Heart right ventricle (tissue), 16 donors: ENCODE measurements at regions of chr2 and their contacts with region 1.

Region 1: DNA sequence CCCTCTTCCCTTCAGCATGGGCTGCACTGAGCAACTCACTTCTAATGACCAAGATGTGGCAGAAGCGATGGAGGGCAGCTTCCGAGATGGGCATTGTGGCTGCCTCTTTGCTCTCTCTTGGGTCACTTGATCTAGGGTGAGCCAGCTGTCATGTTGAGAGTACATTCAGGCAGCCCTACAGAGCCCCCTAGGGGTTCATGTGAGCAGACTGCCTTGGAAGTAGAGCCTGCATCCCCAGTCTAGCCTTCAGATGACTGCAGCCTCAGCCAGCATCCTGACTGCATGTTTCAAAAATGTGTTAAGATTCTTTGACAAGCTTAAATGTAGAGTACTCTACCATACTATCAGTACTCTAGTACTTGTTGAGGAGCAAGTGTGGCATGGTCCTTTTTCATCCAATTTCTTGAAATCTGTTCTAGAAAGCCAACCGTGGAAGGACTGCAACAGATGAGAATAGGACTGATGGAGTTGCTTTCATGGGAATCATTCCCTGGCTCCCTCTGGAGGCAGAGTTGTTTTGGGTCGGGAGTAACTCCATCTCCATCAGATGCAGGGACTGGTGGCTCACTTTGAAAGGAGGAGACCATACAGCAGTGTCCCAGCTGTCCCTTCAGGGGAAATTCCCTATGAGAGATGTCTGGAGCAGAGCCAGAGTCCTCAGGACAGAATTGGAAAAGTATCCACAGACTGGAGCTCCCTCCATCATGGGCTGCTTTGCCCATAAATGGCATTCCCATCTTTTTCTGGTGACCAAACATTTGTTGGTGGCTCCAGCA is 144.1 kb downstream of the NCK2 start:
- DNase-seq: peak in 1 of 2 donors; percentile 58
- ATAC-seq: peak in 7 of 8 donors; percentile 10 to 59 (median 37)
- H3K4me3 ChIP-seq: no peak overlapping the region
- H3K27ac ChIP-seq: peak overlapping the region in 4 of 10 donors; percentile 2 to 75 (median 6)
- H3K4me1 ChIP-seq: peaks cover 8 to 71% (median 50%) of the 10 kb centered on the region in 9 donors
- H3K27me3 ChIP-seq: no peaks in the 10 kb centered on the region
- CTCF ChIP-seq: peak in 1 of 9 donors; percentile 28

Region 2: GRCh38 chr2:105802587-105802986 is 86.2 kb before region 1 on chr2:
- intact Hi-C with region 1: loop called in 1 of 10 experiments (anchors 5 kb)
- DNase-seq: no peak
- ATAC-seq: no peak
- H3K4me3 ChIP-seq: no peak overlapping the region
- H3K27ac ChIP-seq: peak overlapping the region in 1 of 10 donors; percentile 11
- H3K4me1 ChIP-seq: peaks cover 6 to 83% (median 75%) of the 10 kb centered on the region in 9 donors
- H3K27me3 ChIP-seq: no peaks in the 10 kb centered on the region
- CTCF ChIP-seq: no peak

Region 3: DNA sequence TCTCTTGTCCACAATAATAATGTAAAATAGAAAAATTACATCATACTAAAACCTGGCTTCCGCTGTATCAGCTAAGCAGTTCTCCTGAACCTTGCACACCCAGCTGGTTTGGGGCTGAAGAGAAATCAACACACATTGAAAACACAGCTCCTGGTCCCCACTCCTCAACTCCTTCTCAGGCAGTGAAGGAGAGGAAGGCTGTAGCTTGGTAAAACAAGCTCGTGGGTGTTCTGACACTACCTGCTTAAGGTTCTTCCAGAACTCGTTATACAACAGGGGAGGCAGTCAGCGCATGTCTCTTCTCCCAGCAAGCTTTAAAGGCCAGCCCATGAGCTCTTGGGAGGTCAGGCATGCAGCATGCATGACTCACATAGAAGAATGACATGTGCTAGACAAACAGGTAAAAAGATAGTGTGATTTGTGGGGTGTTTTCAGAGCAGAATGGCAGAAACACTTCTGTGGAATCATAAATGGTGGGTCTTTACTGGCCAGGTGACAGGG is 236.1 kb after region 1 on chr2:
- intact Hi-C with region 1: no loop called
- DNase-seq: no peak
- ATAC-seq: no peak
- H3K4me3 ChIP-seq: no peak overlapping the region
- H3K27ac ChIP-seq: no peak overlapping the region
- H3K4me1 ChIP-seq: peaks cover 0 to 3% (median 0%) of the 10 kb centered on the region in 9 donors
- H3K27me3 ChIP-seq: no peaks in the 10 kb centered on the region
- CTCF ChIP-seq: no peak